ENCODE measurements at regions of chr19 and their contacts with region 1.

Region 1: GRCh38 chr19:55258828-55259539 is at the start of gene PPP6R1:
- H3K4me3 Mint-ChIP-seq: peak within 1 kb of the TSS; percentile 93
- H3K27ac Mint-ChIP-seq: peak within 1 kb of the TSS; percentile 91
- H3K4me1 Mint-ChIP-seq: peaks cover 47% of the 10 kb centered on the region
- H3K27me3 Mint-ChIP-seq: no peaks in the 10 kb centered on the region

Region 2: GRCh38 chr19:55216461-55217198 is 42.4 kb before region 1 on chr19:
- intact Hi-C with region 1: loop called (anchors 1 kb)
- H3K4me3 Mint-ChIP-seq: peak overlapping the region; percentile 83
- H3K27ac Mint-ChIP-seq: peak overlapping the region; percentile 90
- H3K4me1 Mint-ChIP-seq: peaks cover 25% of the 10 kb centered on the region
- H3K27me3 Mint-ChIP-seq: peaks cover 16% of the 10 kb centered on the region

Region 3: GRCh38 chr19:55279770-55280643 is 21.0 kb after region 1 on chr19 and contains the start of gene HSPBP1:
- intact Hi-C with region 1: loop called (anchors 1 kb)
- H3K4me3 Mint-ChIP-seq: peak within 1 kb of the TSS; percentile 91
- H3K27ac Mint-ChIP-seq: peak within 1 kb of the TSS; percentile 92
- H3K4me1 Mint-ChIP-seq: peaks cover 34% of the 10 kb centered on the region
- H3K27me3 Mint-ChIP-seq: peaks cover 14% of the 10 kb centered on the region